ENCODE measurements at regions of chr15 and their contacts with region 1.

Region 1: GRCh38 chr15:44663409-44664308 is at the start of gene SPG11:
- DNase-seq: peak; percentile 94
- ATAC-seq: peak; percentile 83
- H3K4me3 Mint-ChIP-seq: peak within 1 kb of the TSS; percentile 94
- H3K27ac Mint-ChIP-seq: peak within 1 kb of the TSS; percentile 98
- H3K4me1 Mint-ChIP-seq: peaks cover 50% of the 10 kb centered on the region
- H3K27me3 Mint-ChIP-seq: no peaks in the 10 kb centered on the region
- total RNA-seq, gene SPG11: 110 TPM

Region 2: DNA sequence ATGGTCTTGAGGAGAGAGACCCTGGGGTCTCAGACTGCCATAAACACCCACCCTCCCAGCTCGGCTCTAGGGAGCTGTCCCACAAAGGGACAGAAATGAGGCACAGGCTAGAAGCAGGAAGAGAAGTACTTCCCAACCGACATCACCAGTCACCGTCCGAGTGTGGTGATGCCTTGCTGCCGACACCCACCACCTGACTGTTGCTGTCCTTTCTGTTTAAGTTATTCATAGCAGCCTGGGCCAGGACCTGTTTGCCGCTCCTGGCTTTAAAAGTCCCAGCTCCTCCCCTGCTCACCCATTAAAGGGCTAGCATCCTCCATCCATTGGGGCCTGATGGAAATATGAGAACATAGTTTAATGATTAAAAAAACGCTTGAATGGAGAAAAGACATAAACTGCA is 13.0 kb after region 1 on chr15:
- POLR2A ChIA-PET with region 1: interaction called, 150 read pairs
- DNase-seq: no peak
- ATAC-seq: peak; percentile 45
- H3K4me3 Mint-ChIP-seq: peak overlapping the region; percentile 73
- H3K27ac Mint-ChIP-seq: peak overlapping the region; percentile 85
- H3K4me1 Mint-ChIP-seq: peaks cover 61% of the 10 kb centered on the region
- H3K27me3 Mint-ChIP-seq: no peaks in the 10 kb centered on the region

Region 3: DNA sequence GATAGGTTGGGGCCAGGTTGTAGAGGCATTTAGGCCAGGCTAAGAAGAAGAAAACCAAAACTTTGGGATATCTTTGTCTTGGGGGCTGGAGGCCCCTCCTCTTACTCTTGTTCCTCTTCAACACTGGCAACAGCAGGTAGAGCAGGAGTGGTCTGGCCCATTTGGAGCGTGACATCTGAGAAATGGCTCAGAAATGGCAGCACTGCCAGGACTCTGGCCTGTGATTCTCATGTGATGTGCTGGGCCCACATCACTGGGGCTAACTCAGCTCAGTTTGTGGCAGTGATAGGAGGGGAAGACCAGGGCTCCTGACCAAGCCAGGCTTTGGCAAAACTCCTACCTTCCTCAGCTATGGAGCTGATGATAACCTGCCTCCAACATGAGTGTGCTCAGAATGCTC is 29.0 kb after region 1 on chr15:
- POLR2A ChIA-PET with region 1: interaction called, 61 read pairs
- DNase-seq: no peak
- ATAC-seq: no peak
- H3K4me3 Mint-ChIP-seq: no peak overlapping the region
- H3K27ac Mint-ChIP-seq: no peak overlapping the region
- H3K4me1 Mint-ChIP-seq: peaks cover 30% of the 10 kb centered on the region
- H3K27me3 Mint-ChIP-seq: no peaks in the 10 kb centered on the region

Region 4: DNA sequence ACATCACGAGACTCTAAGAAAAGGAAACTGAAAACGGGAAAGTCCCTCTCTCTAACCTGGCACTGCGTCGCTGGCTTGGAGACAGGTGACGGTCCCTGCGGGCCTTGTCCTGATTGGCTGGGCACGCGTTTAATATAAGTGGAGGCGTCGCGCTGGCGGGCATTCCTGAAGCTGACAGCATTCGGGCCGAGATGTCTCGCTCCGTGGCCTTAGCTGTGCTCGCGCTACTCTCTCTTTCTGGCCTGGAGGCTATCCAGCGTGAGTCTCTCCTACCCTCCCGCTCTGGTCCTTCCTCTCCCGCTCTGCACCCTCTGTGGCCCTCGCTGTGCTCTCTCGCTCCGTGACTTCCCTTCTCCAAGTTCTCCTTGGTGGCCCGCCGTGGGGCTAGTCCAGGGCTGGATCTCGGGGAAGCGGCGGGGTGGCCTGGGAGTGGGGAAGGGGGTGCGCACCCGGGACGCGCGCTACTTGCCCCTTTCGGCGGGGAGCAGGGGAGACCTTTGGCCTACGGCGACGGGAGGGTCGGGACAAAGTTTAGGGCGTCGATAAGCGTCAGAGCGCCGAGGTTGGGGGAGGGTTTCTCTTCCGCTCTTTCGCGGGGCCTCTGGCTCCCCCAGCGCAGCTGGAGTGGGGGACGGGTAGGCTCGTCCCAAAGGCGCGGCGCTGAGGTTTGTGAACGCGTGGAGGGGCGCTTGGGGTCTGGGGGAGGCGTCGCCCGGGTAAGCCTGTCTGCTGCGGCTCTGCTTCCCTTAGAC is 47.9 kb after region 1 on chr15 and contains the start of gene B2M:
- POLR2A ChIA-PET with region 1: interaction called, 1,234 read pairs
- DNase-seq: peak; percentile 96
- ATAC-seq: peak; percentile 77
- H3K4me3 Mint-ChIP-seq: peak within 1 kb of the TSS; percentile 92
- H3K27ac Mint-ChIP-seq: peak within 1 kb of the TSS; percentile 100
- H3K4me1 Mint-ChIP-seq: peaks cover 38% of the 10 kb centered on the region
- H3K27me3 Mint-ChIP-seq: no peaks in the 10 kb centered on the region
- total RNA-seq, gene B2M: 7,848 to 8,493 TPM